ENCODE measurements at regions of chr11 and their contacts with region 1.

Region 1: GRCh38 chr11:16179676-16180075 is 176.7 kb downstream of the SOX6 start:
- DNase-seq: no peak
- H3K4me3 ChIP-seq: no peak overlapping the region
- CTCF ChIP-seq: no peak
- POLR2A ChIP-seq: no peak

Region 2: DNA sequence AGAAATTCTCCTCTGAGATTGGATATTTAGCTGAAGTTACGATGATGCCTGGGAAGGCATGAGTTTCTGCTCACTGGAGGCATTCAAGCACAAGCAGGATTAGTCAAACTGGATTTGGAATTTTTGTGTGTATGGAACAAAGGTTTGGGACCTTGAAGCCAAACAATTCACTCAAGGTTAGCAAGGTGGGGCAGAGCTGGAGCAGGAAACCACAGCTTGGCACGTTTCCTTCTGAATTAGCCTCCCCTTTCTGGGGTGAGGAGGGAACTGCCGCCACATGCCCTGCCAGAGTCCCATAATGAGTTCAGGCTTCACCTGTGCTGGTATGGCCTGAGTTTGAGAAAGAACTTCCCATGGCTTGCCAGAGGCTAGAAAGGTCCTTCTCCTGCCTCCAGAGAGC is 1769.8 kb before region 1 on chr11:
- intact Hi-C with region 1: loop called (anchors 5 kb)
- DNase-seq: no peak
- H3K4me3 ChIP-seq: no peak overlapping the region
- CTCF ChIP-seq: no peak
- POLR2A ChIP-seq: no peak

Region 3: DNA sequence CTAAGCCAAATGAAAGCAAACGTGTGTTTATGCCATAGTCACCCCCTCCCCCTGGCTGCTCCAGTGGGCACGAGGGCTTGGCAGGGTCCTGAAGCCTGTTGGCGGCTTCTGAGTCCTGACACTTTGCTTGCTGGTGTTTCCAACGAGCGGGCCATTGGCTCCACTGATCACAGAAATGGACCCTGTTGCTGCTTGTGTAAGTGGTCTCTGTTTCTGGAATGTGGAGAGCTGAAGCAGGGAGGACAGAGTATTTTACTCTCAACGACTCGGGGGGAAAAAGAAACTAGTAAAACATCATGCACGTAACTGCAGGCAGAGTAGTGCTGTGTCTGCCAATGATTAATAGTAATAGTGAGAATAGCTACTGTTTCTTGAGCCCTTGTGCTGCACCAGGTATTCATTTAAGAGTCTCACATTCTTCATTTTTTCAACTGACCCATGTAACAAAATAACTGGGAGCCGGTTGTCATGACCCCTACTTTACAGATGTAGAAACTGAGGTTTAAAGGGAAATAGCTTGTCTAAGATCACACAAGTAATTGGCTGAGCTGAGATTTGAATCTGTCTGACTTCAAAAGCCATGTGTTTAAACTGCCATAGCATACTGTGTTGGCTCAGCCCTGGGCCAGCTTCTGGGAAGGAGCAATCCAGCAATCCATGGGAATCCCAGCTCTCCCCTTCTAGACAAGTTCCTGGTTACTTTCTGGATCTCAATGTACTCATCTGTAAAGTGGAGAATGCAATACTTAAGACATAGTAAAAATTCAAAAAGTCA is 538.2 kb before region 1 on chr11:
- intact Hi-C with region 1: no loop called
- DNase-seq: no peak
- H3K4me3 ChIP-seq: no peak overlapping the region
- CTCF ChIP-seq: no peak
- POLR2A ChIP-seq: no peak

Region 4: GRCh38 chr11:15923183-15923582 is 256.5 kb before region 1 on chr11:
- intact Hi-C with region 1: no loop called
- DNase-seq: no peak
- H3K4me3 ChIP-seq: no peak overlapping the region
- CTCF ChIP-seq: no peak
- POLR2A ChIP-seq: no peak

Region 5: GRCh38 chr11:15969701-15970329 is 209.9 kb before region 1 on chr11:
- intact Hi-C with region 1: loop called (anchors 2 kb)
- DNase-seq: peak in 1 of 2 donors; percentile 61
- H3K4me3 ChIP-seq: no peak overlapping the region
- CTCF ChIP-seq: no peak
- POLR2A ChIP-seq: no peak

Measured in lower leg skin (tissue), 4 donors.